Left colon (tissue), 2 donors: ENCODE measurements at regions of chr6 and their contacts with region 1.

Region 1: DNA sequence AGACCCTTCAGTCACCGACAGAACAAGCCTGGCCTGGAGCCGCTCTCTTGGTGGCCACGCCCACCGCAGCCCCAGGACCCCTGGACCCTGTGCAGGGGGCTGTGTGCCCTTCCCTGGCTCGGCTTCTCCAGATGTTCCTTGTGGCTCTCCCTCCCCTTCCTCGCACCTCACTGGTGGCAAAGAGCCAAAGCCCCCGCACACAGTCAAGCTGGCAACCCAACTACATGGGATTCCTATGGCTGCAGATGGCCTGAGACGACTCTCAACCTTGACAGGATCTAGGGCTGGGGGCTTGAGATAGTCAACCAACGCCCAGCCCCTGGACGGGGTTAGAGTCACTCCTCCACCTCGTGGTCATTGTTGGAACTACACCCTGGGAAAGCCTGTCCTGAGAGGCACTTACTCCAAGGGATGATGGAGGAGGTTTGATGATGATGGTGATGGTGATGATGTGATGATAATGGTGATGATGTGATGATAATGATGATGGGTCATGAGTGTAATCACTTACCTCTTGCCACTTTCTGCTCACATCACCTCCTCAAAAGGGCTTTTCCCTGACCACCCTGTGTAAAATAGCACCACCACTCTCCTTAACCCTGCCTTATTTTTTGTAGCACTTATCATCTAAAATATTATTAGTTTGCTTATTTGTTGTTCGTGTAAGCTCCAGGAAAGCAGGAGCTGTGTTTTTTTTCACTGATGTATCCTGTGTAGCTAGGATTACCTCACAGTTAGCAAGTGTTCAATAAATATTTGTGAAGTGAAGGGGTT is 278.4 kb downstream of the LRFN2 start:
- DNase-seq: peak; percentile 31 to 68
- ATAC-seq: peak; percentile 71

Region 2: DNA sequence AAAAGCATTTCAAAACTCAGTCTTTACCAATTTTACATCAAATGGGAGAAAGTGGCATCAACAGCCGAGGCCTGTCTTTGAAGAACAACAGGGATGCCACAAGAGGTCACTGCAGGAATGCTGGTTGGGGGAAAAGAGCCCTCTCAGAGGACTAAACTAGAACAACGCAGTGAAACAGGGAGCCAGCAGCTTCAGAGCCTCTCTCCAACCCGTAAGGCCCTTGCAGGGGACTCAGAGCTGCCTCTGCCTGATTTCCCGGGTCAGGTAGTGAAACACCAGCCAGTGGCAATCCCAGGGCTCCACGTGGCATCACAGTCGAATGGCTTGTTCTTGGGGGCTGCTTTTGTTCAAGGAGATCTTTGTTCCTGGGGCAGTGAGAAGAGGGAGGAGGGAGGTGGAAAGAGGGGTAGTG is 931.2 kb before region 1 on chr6:
- intact Hi-C with region 1: loop called in 1 of 2 experiments (anchors 10 kb)
- DNase-seq: peak; percentile 59 to 63
- ATAC-seq: peak; percentile 93

Region 3: GRCh38 chr6:39980839-39981580 is 327.7 kb before region 1 on chr6:
- intact Hi-C with region 1: loop called (anchors 5 to 10 kb)
- DNase-seq: peak in 1 of 2 donors; percentile 16
- ATAC-seq: peak; percentile 64

Region 4: DNA sequence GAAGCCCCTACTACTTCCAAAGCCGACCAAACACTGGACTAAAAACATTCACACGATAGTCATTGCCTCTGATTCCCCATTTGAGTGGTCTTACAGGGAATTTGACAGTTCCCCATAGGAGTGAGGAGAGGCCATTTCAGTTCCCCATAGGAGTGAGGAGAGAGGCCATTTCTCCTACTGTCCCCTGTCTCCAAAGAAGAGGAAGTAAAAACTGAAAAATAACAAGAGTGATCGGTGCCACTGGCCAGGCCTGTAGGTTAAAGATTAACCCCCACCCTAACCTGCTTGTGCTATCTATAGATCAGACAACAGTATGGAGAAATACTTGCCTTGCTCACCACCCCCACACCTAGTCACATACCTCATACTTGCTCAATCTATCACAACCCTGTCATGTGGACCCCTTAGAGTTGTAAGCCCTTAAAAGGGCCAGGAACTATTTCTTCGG is 170.4 kb before region 1 on chr6:
- intact Hi-C with region 1: no loop called
- DNase-seq: peak; percentile 43 to 67
- ATAC-seq: peak; percentile 82